CD14-positive monocyte (primary cell): ENCODE measurements at regions of chr3 and their contacts with region 1.

Region 1: DNA sequence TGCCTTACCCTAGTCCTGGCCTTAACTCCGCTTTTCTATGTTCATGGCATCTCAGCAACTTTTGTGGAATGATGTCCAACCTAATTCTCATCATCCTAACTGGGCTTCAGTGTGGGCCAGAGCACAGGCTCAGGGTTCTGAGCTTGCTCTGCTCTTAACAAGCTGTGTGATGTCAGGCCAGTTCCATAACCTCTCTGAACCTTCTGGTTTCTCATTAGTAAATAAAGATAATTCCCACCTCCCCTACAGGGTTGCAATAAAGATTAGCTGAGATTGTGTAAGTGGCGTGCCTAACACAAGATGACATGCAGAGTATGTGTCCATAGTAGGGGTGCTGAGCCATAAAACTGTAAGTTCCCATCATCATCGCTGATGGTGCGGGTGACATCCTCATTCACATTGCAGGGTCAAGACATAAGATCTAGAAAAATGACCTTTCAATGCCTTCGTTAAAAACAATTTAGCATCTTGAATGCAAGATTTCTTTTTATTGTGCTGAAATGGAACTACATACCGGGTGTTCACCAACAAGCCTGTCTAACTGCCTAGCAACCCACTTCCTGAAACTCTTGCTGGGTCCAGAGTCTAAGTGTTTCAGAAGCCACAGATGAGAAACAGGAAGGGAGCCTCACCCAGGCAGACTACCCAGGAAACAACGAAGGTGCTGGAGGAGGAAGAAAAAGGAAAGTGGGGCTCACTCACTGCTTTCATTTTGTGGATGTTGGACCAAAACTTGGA is 36.2 kb downstream of the CDCP1 start:
- DNase-seq: peak; percentile 84 to 91 (median 87)
- H3K4me3 ChIP-seq: peak overlapping the region; percentile 31 to 68 (median 35)
- H3K4me3 Mint-ChIP-seq: peak overlapping the region; percentile 73 to 86
- H3K27ac ChIP-seq: peak overlapping the region; percentile 87 to 98
- H3K27ac Mint-ChIP-seq: peak overlapping the region; percentile 96 to 99 (median 99)
- H3K4me1 ChIP-seq: peaks cover 21 to 47% of the 10 kb centered on the region in 2 donors
- H3K4me1 Mint-ChIP-seq: peaks cover 64% of the 10 kb centered on the region
- H3K27me3 ChIP-seq: no peaks in the 10 kb centered on the region
- H3K27me3 Mint-ChIP-seq: peaks cover 2% of the 10 kb centered on the region in 3 donors
- CTCF ChIP-seq: no peak

Region 2: DNA sequence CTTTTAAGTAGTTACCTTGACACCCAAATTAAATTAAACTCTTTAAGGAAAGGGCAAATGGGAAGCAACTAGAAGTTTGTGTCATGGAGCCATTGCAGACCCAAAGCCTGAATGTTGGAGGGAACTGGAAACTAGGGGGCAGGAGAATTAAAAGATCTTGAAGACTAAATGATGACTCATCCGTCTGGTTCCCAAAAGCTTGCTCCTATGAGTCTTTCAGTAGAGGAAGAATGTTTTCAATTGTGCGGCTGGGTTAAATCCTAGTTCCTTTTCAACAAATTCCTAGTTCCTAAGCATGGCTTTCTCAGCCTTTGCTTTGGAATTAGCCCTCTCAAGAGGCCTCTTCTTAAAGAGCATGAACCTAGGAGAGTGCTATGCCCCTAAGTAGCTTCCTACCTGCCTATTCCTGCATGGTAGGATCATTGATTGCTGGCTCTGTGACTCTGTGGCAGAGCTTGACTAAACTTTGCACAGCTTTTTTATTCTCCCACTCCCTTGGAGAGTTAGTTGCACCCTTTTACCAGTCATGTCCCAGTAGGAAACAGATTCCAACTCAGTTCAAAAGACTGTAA is 66.1 kb before region 1 on chr3:
- intact Hi-C with region 1: loop called in 1 of 2 experiments (anchors 5 kb)
- DNase-seq: peak; percentile 63 to 95 (median 89)
- H3K4me3 ChIP-seq: no peak overlapping the region
- H3K4me3 Mint-ChIP-seq: no peak overlapping the region
- H3K27ac ChIP-seq: peak overlapping the region in 1 of 2 donors; percentile 42
- H3K27ac Mint-ChIP-seq: peak overlapping the region; percentile 68 to 93 (median 83)
- H3K4me1 ChIP-seq: peaks cover 19 to 42% of the 10 kb centered on the region in 2 donors
- H3K4me1 Mint-ChIP-seq: peaks cover 41% of the 10 kb centered on the region
- H3K27me3 ChIP-seq: no peaks in the 10 kb centered on the region
- H3K27me3 Mint-ChIP-seq: peaks cover 0 to 6% (median 3%) of the 10 kb centered on the region in 3 donors
- CTCF ChIP-seq: no peak

Region 3: GRCh38 chr3:45064512-45065372 is 45.2 kb before region 1 on chr3:
- intact Hi-C with region 1: loop called (anchors 5 to 10 kb)
- DNase-seq: peak; percentile 87 to 97 (median 95)
- H3K4me3 ChIP-seq: peak overlapping the region; percentile 3 to 62 (median 23)
- H3K4me3 Mint-ChIP-seq: peak overlapping the region; percentile 74 to 88
- H3K27ac ChIP-seq: peak overlapping the region; percentile 90 to 96
- H3K27ac Mint-ChIP-seq: peak overlapping the region; percentile 98 to 100 (median 99)
- H3K4me1 ChIP-seq: peaks cover 34 to 43% of the 10 kb centered on the region in 2 donors
- H3K4me1 Mint-ChIP-seq: peaks cover 44% of the 10 kb centered on the region
- H3K27me3 ChIP-seq: no peaks in the 10 kb centered on the region
- H3K27me3 Mint-ChIP-seq: peaks cover 0 to 2% (median 0%) of the 10 kb centered on the region in 3 donors
- CTCF ChIP-seq: no peak